ENCODE measurements at regions of chr22 and their contacts with region 1.

Region 1: DNA sequence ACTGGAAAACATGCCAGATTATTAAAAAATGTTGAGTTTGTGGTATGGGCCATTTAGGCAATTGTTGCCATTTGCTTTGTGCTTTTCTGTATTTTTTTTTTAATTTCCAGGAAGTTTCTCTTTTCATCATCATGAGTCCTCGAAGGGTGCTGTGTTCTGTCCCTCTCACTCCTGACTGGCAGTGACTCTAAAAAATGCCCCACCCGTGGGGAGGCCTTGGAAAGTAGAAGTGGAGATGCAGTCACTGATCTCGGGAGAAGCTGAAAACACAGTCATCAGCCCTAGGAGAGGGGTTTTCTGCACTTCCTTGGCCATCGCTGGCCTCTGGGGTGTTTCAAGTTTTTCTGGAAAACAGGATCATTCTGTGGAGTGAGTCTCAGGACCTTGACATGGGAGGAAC is 98.5 kb upstream of the GRK3 start:
- DNase-seq: no peak
- H3K4me3 ChIP-seq: no peak overlapping the region
- H3K27ac ChIP-seq: no peak overlapping the region
- H3K4me1 ChIP-seq: no peaks in the 10 kb centered on the region
- H3K27me3 ChIP-seq: no peaks in the 10 kb centered on the region
- CTCF ChIP-seq: no peak

Region 2: GRCh38 chr22:25702040-25702439 is 236.1 kb after region 1 on chr22:
- CTCF ChIA-PET with region 1: no interaction called
- POLR2A ChIA-PET with region 1: no interaction called
- intact Hi-C with region 1: loop called (anchors 2 kb)
- DNase-seq: no peak
- H3K4me3 ChIP-seq: no peak overlapping the region
- H3K27ac ChIP-seq: no peak overlapping the region
- H3K4me1 ChIP-seq: no peaks in the 10 kb centered on the region
- H3K27me3 ChIP-seq: peaks cover 36% of the 10 kb centered on the region
- CTCF ChIP-seq: peak; percentile 55

Region 3: GRCh38 chr22:26330966-26331625 is 865.1 kb after region 1 on chr22:
- CTCF ChIA-PET with region 1: no interaction called
- POLR2A ChIA-PET with region 1: no interaction called
- intact Hi-C with region 1: loop called (anchors 5 kb)
- DNase-seq: peak in 1 of 2 experiments; percentile 30
- H3K4me3 ChIP-seq: no peak overlapping the region
- H3K27ac ChIP-seq: no peak overlapping the region
- H3K4me1 ChIP-seq: no peaks in the 10 kb centered on the region
- H3K27me3 ChIP-seq: peaks cover 26% of the 10 kb centered on the region
- CTCF ChIP-seq: peak; percentile 92